ENCODE measurements at regions of chr5 and their contacts with region 1.

Region 1: GRCh38 chr5:95846554-95847260 is 24.2 kb upstream of the GLRX start:
- DNase-seq: peak; percentile 66 to 70 (median 69)
- H3K4me3 ChIP-seq: no peak overlapping the region
- H3K4me3 Mint-ChIP-seq: no peak overlapping the region
- H3K27ac ChIP-seq: no peak overlapping the region
- H3K27ac Mint-ChIP-seq: peak overlapping the region in 2 of 7 donors; percentile 30 to 32
- H3K4me1 ChIP-seq: peaks cover 20% of the 10 kb centered on the region
- H3K4me1 Mint-ChIP-seq: peaks cover 14 to 30% (median 19%) of the 10 kb centered on the region in 4 donors
- H3K27me3 ChIP-seq: no peaks in the 10 kb centered on the region
- H3K27me3 Mint-ChIP-seq: no peaks in the 10 kb centered on the region

Region 2: DNA sequence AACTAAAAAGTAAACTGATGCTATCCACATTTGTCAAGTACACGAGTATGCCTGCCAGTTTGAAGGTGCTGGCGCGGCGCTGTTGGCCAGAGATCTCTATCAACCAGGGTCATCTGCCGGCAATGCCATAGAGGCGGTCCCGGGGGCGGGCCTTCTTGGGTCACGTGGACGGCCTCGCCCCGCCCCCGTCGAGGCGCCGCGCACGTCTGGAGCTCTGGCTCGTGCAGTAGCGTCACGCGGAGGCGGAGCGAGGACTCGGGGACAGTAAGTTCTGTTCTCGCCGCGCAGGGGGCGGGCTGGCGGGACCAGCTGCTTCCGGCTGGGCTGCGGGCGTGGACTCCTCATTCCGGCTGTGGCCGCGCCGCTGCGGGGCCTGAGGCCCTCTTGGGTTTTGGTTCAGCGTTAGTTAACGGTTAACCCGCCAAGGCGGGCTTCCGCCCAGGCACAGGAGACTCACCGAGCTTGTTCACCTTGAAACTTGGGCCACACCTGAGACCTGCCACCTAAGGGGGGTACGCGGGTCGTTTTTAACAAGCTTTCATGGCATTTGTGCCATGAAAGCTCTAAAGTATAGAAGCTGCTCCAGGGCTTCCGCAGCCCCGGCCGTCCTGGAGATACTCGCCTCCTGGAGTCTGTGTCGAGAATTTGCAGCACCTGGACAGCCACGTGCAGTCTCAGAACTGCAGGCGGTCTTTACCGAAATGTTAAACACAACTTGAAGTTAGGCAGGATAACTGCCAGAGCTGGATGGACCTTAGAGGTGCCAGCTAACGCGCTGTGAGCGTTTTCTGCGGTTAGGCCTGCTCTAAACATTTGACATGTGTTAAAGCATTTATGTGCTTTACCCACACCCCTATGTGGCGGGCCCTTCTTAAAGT is 199.9 kb before region 1 on chr5 and contains the start of gene RFESD:
- CTCF ChIA-PET with region 1: interaction called, 131 read pairs
- POLR2A ChIA-PET with region 1: interaction called, 5 read pairs
- intact Hi-C with region 1: loop called (anchors 1 kb)
- DNase-seq: peak; percentile 91 to 95 (median 92)
- H3K4me3 ChIP-seq: peak within 1 kb of the TSS; percentile 71 to 94
- H3K4me3 Mint-ChIP-seq: peak within 1 kb of the TSS; percentile 87 to 93 (median 89)
- H3K27ac ChIP-seq: peak within 1 kb of the TSS; percentile 84
- H3K27ac Mint-ChIP-seq: peak within 1 kb of the TSS; percentile 57 to 94 (median 93)
- H3K4me1 ChIP-seq: peaks cover 31% of the 10 kb centered on the region
- H3K4me1 Mint-ChIP-seq: peaks cover 20 to 42% (median 26%) of the 10 kb centered on the region in 4 donors
- H3K27me3 ChIP-seq: no peaks in the 10 kb centered on the region
- H3K27me3 Mint-ChIP-seq: no peaks in the 10 kb centered on the region
- total RNA-seq, gene RFESD: 9.1 to 9.3 TPM

Region 3: DNA sequence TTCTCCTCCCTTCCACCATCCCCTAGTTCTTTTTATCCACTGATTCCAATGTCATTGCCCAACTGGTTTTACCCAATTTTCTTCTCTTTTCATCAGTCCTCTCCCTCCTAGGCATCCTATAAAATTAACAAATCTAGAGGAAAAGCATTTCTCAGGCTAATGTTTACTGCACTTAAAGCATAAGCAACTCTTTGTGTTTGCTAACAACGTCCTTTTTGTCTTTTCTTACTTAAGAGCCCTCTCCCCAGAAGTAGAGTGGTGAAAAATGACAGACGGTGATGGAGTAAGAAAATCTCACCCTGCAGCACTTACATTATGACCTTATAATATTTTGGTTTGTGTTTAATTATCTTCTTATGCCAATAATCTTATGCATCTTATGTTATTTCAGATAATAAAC is 162.3 kb before region 1 on chr5:
- CTCF ChIA-PET with region 1: no interaction called
- POLR2A ChIA-PET with region 1: no interaction called
- intact Hi-C with region 1: no loop called
- DNase-seq: no peak
- H3K4me3 ChIP-seq: no peak overlapping the region
- H3K4me3 Mint-ChIP-seq: no peak overlapping the region
- H3K27ac ChIP-seq: no peak overlapping the region
- H3K27ac Mint-ChIP-seq: no peak overlapping the region
- H3K4me1 ChIP-seq: no peaks in the 10 kb centered on the region
- H3K4me1 Mint-ChIP-seq: no peaks in the 10 kb centered on the region
- H3K27me3 ChIP-seq: no peaks in the 10 kb centered on the region
- H3K27me3 Mint-ChIP-seq: peaks cover 12 to 18% of the 10 kb centered on the region in 2 donors

Region 4: DNA sequence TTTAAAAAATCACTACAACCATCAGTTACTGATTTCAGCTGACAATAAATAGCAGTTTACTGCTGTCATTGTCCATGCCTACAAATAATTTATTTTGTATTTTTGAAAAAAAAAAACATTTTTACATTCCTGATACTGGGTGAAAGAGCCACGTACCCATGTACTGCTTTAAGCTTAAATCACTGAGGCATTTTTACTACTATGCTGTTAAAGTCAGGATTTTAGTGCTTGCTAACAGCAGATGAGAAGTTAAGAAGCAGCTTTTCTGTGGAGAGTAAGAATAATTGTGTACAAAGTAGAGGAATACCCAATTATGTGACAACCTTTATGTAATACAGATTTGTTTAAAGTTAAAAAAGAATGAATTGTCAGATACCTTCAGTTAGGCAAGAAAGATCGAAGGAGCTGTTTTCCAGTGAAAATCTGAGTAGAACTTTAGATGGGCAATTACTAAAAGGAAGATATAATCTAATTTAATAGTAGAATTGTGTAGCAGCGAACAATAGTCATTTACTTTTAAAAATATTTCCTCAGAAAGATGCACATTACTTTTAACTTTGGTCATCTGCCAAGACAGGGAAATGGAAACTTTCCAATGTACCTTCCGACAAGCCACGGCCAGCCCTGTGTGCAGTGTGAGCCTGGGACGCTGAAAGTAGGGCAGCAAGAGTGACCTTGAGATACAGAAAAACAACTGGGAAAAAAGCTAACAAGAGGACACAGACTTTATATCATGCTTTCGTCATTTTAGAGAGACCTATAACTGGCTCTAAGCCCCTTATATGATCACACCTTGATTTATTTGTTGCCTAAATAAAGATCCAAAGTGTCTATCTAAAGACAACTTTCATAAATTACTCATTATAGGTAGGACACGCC is 75.6 kb before region 1 on chr5:
- CTCF ChIA-PET with region 1: interaction called, 902 read pairs
- POLR2A ChIA-PET with region 1: no interaction called
- intact Hi-C with region 1: no loop called
- DNase-seq: no peak
- H3K4me3 ChIP-seq: no peak overlapping the region
- H3K4me3 Mint-ChIP-seq: peak overlapping the region in 1 of 8 donors; percentile 21
- H3K27ac ChIP-seq: no peak overlapping the region
- H3K27ac Mint-ChIP-seq: no peak overlapping the region
- H3K4me1 ChIP-seq: no peaks in the 10 kb centered on the region
- H3K4me1 Mint-ChIP-seq: no peaks in the 10 kb centered on the region
- H3K27me3 ChIP-seq: no peaks in the 10 kb centered on the region
- H3K27me3 Mint-ChIP-seq: peaks cover 0 to 2% of the 10 kb centered on the region in 2 donors

Region 5: DNA sequence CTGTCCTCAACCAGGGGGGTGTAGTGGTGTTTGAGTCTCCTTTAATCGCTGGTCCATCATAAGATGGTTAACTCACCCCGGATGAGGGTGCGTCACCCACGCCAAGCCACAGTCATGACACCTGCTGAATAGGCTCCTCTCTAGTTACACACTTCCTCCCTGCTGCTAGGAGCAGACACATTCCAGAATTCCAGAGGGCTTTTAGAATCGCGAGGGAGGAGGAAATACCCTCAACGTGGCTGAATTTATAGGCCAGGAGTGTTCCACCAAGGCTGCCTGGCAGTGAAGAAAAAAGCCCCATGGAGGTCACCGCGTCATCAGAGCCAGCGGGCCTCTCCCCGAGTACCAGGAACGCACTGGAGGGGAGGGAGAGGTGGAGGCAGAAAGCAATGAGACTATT is 29.3 kb before region 1 on chr5:
- CTCF ChIA-PET with region 1: interaction called, 51 read pairs
- POLR2A ChIA-PET with region 1: interaction called, 273 read pairs
- intact Hi-C with region 1: loop called (anchors 1 kb)
- DNase-seq: peak in 2 of 5 donors; percentile 35 to 77
- H3K4me3 ChIP-seq: peak overlapping the region; percentile 21 to 44
- H3K4me3 Mint-ChIP-seq: peak overlapping the region; percentile 79 to 100 (median 98)
- H3K27ac ChIP-seq: peak overlapping the region; percentile 66
- H3K27ac Mint-ChIP-seq: peak overlapping the region; percentile 76 to 96 (median 92)
- H3K4me1 ChIP-seq: peaks cover 82% of the 10 kb centered on the region
- H3K4me1 Mint-ChIP-seq: peaks cover 64 to 95% (median 68%) of the 10 kb centered on the region in 4 donors
- H3K27me3 ChIP-seq: no peaks in the 10 kb centered on the region
- H3K27me3 Mint-ChIP-seq: no peaks in the 10 kb centered on the region

Region 6: GRCh38 chr5:95835682-95836385 is 10.9 kb before region 1 on chr5:
- CTCF ChIA-PET with region 1: interaction called, 13 read pairs
- POLR2A ChIA-PET with region 1: interaction called, 15 read pairs
- intact Hi-C with region 1: loop called (anchors 1 kb)
- DNase-seq: peak; percentile 28 to 70 (median 33)
- H3K4me3 ChIP-seq: peak overlapping the region; percentile 43 to 78
- H3K4me3 Mint-ChIP-seq: peak overlapping the region; percentile 82 to 98 (median 89)
- H3K27ac ChIP-seq: peak overlapping the region; percentile 77
- H3K27ac Mint-ChIP-seq: peak overlapping the region; percentile 87 to 97 (median 93)
- H3K4me1 ChIP-seq: peaks cover 39% of the 10 kb centered on the region
- H3K4me1 Mint-ChIP-seq: peaks cover 24 to 68% (median 49%) of the 10 kb centered on the region in 4 donors
- H3K27me3 ChIP-seq: no peaks in the 10 kb centered on the region
- H3K27me3 Mint-ChIP-seq: no peaks in the 10 kb centered on the region

Region 7: GRCh38 chr5:95876782-95877181 is 30.1 kb after region 1 on chr5:
- CTCF ChIA-PET with region 1: no interaction called
- POLR2A ChIA-PET with region 1: no interaction called
- intact Hi-C with region 1: no loop called
- DNase-seq: no peak
- H3K4me3 ChIP-seq: no peak overlapping the region
- H3K4me3 Mint-ChIP-seq: no peak overlapping the region
- H3K27ac ChIP-seq: no peak overlapping the region
- H3K27ac Mint-ChIP-seq: no peak overlapping the region
- H3K4me1 ChIP-seq: no peaks in the 10 kb centered on the region
- H3K4me1 Mint-ChIP-seq: peaks cover 0 to 12% (median 4%) of the 10 kb centered on the region in 4 donors
- H3K27me3 ChIP-seq: no peaks in the 10 kb centered on the region
- H3K27me3 Mint-ChIP-seq: peaks cover 0 to 3% of the 10 kb centered on the region in 2 donors